Psoas muscle (tissue), 8 donors: ENCODE measurements at regions of chr13 and their contacts with region 1.

Region 1: GRCh38 chr13:29771247-29771646 is 79.2 kb downstream of the UBL3 start:
- DNase-seq: no peak
- ATAC-seq: peak in 2 of 4 donors; percentile 35 to 67
- H3K4me3 ChIP-seq: no peak overlapping the region
- H3K27ac ChIP-seq: no peak overlapping the region
- H3K4me1 ChIP-seq: no peaks in the 10 kb centered on the region
- H3K27me3 ChIP-seq: no peaks in the 10 kb centered on the region
- CTCF ChIP-seq: peak; percentile 62

Region 2: GRCh38 chr13:29923554-29924481 is 152.6 kb after region 1 on chr13:
- intact Hi-C with region 1: loop called in 1 of 2 experiments (anchors 10 kb)
- DNase-seq: peak; percentile 76 to 79
- ATAC-seq: peak; percentile 77 to 92 (median 86)
- H3K4me3 ChIP-seq: no peak overlapping the region
- H3K27ac ChIP-seq: peak overlapping the region; percentile 77
- H3K4me1 ChIP-seq: peaks cover 18% of the 10 kb centered on the region
- H3K27me3 ChIP-seq: no peaks in the 10 kb centered on the region
- CTCF ChIP-seq: peak; percentile 65